ENCODE measurements at regions of chr1 and their contacts with region 1.

Region 1: GRCh38 chr1:156892190-156893047 is 1.1 kb upstream of the PEAR1 start:
- DNase-seq: peak; percentile 88
- H3K4me3 Mint-ChIP-seq: peak overlapping the region; percentile 56
- H3K27ac Mint-ChIP-seq: no peak overlapping the region
- H3K4me1 Mint-ChIP-seq: peaks cover 26% of the 10 kb centered on the region
- H3K27me3 Mint-ChIP-seq: peaks cover 18% of the 10 kb centered on the region
- CTCF ChIP-seq: peak; percentile 94

Region 2: DNA sequence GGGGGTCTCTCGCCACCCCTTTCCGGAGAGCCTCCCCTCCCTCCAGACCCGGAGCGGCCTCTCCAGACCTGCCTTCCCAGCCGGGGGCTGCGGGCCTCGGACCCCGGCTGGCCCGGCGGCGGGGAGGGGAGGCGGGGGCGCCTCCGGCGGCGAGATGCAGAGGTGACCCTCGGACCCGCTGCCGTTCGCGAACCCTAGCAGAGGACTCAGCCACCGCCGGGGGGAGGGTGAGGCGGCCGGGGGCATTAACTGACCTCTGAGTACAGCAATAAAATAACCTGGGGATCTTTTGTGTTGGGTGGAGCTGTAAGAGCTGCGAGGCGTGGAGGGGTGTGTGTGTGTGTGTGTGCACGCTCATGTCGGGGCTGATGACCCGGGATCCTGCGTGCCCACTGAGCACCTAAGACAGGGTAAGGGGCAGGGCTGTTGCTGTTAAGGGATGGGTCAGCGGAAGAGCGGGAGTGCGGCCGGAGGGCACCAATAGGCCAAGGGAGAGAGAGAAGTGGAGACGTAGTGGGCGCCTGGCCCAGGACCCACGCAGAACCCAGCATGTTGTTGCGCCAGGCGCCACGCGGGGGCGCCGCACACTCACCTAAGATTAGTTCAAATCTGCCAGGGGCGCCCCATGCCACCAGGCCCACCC is 266.9 kb before region 1 on chr1:
- CTCF ChIA-PET with region 1: interaction called, 7 read pairs
- POLR2A ChIA-PET with region 1: no interaction called
- intact Hi-C with region 1: loop called (anchors 1 kb)
- DNase-seq: peak; percentile 61
- H3K4me3 Mint-ChIP-seq: peak overlapping the region; percentile 35
- H3K27ac Mint-ChIP-seq: no peak overlapping the region
- H3K4me1 Mint-ChIP-seq: peaks cover 12% of the 10 kb centered on the region
- H3K27me3 Mint-ChIP-seq: peaks cover 61% of the 10 kb centered on the region
- CTCF ChIP-seq: peak; percentile 91

Region 3: DNA sequence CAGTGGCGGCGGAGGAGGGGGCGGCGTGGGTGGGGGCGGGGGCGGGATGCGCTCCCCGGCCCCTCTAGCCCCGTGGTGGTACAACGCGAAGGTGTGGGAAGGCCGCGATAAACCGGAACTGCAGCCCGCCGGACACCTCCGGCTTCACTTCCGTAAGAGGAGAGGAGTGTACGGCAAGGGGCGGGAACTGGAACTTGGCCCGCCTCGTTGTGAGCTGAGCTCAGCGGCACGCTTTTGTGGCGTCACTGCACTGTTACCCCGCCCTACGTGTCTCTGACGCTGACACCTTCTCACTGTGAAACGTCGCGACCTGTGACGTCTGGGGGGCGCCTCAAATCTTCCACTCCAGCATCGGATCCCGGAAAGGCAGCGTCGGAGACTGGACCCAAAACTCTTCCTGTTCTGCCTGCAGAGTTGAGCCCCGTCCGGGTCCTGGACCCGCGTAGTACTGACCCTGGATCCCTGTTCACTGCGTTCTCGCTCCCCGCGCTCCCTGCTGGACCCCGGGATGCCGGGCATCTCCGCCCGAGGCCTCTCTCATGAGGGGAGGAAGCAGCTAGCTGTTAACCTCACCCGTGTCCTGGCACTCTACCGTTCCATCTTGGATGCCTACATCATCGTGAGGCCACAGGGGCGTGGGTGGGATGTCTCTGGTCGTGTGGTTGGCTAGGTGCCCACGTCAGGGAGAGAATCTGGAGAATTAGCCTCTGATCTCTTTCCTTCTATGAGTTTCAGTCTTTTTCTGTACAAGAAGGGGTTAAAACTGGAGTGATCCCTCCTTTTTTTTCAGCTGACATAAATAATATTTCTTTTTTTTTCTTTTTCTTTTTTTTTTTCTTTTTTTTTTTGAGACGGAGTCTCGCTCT is 163.6 kb before region 1 on chr1 and contains the start of gene ISG20L2:
- CTCF ChIA-PET with region 1: interaction called, 76 read pairs
- POLR2A ChIA-PET with region 1: interaction called, 22 read pairs
- intact Hi-C with region 1: loop called (anchors 1 kb)
- DNase-seq: peak; percentile 98
- H3K4me3 Mint-ChIP-seq: no peak within 1 kb of the TSS
- H3K27ac Mint-ChIP-seq: no peak within 1 kb of the TSS
- H3K4me1 Mint-ChIP-seq: peaks cover 27% of the 10 kb centered on the region
- H3K27me3 Mint-ChIP-seq: no peaks in the 10 kb centered on the region
- CTCF ChIP-seq: no peak
- total RNA-seq, gene ISG20L2: 49.9 and 57.5 TPM in 2 replicates

Region 4: DNA sequence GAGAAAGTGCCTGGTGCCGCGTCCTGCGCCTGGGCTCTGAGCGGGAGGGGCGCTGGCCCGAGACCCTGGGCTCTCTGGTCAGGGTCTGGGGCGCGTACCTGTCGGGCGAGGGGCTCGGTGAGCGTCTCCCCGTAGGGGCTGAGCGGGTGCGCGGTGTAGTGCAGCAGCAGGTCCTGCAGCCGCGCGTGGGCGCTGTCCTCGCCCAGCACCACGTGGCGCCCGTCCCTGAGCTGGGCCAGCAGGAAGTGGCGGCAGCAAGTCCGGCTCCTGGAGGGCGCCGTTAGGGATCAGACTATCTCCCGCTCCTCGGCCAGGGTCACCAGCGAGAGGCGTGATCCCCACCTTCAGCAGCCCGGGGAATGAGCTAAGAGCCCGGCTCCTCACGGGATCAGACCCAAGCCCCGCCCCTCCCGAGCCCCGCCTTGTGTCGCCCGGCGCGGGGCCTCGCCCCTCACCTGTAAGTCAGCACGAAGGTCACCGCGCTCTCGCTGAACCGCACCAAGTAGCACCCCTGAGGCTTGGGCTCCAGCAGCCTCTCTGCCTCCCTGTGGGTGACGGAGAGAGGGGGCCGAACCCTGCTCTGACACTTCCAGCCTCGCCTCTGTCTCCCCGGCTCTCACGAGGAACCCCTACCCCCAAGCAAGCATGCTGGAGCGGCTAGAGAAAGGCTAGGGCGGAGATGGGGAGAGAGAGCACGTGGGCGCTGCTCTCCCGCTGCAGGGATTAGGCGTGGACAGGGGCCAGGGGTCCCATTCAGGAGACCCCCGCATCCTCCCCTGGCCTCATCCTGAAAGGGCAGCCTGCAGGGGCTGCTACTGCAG is 78.5 kb before region 1 on chr1:
- CTCF ChIA-PET with region 1: interaction called, 106 read pairs
- POLR2A ChIA-PET with region 1: no interaction called
- intact Hi-C with region 1: no loop called
- DNase-seq: peak; percentile 65
- H3K4me3 Mint-ChIP-seq: peak overlapping the region; percentile 73
- H3K27ac Mint-ChIP-seq: peak overlapping the region; percentile 27
- H3K4me1 Mint-ChIP-seq: peaks cover 48% of the 10 kb centered on the region
- H3K27me3 Mint-ChIP-seq: no peaks in the 10 kb centered on the region
- CTCF ChIP-seq: peak; percentile 55

Region 5: DNA sequence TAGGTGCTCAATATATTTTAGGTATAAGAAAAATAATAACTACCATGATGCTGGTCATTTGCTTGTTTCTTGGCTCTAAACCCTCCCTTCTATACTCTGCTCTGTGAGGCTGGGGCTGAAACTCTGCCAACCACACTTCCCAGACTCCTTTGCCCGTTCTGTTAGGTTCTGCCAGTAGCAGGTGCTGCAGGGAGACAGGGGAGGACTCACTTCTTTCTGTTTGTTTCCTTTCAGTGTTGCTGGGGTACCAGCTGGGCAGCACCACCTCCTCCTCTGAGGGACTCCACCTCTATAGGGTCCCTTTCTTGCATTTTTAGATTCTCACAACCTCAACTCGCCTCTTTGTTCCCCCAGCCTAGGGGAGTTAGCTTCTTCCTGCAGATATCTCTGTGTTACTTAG is 58.8 kb before region 1 on chr1:
- CTCF ChIA-PET with region 1: interaction called, 284 read pairs
- POLR2A ChIA-PET with region 1: no interaction called
- intact Hi-C with region 1: no loop called
- DNase-seq: no peak
- H3K4me3 Mint-ChIP-seq: no peak overlapping the region
- H3K27ac Mint-ChIP-seq: no peak overlapping the region
- H3K4me1 Mint-ChIP-seq: no peaks in the 10 kb centered on the region
- H3K27me3 Mint-ChIP-seq: peaks cover 54% of the 10 kb centered on the region
- CTCF ChIP-seq: no peak

Region 6: GRCh38 chr1:156860113-156860627 is 32.2 kb before region 1 on chr1:
- CTCF ChIA-PET with region 1: interaction called, 163 read pairs
- POLR2A ChIA-PET with region 1: interaction called, 3 read pairs
- intact Hi-C with region 1: loop called (anchors 1 kb)
- DNase-seq: peak; percentile 60
- H3K4me3 Mint-ChIP-seq: peak overlapping the region; percentile 57
- H3K27ac Mint-ChIP-seq: no peak overlapping the region
- H3K4me1 Mint-ChIP-seq: peaks cover 18% of the 10 kb centered on the region
- H3K27me3 Mint-ChIP-seq: peaks cover 53% of the 10 kb centered on the region
- CTCF ChIP-seq: peak; percentile 98

Region 7: GRCh38 chr1:156910309-156910782 is 17.9 kb after region 1 on chr1:
- CTCF ChIA-PET with region 1: interaction called, 34 read pairs
- POLR2A ChIA-PET with region 1: interaction called, 3 read pairs
- intact Hi-C with region 1: no loop called
- DNase-seq: peak; percentile 47
- H3K4me3 Mint-ChIP-seq: no peak overlapping the region
- H3K27ac Mint-ChIP-seq: no peak overlapping the region
- H3K4me1 Mint-ChIP-seq: peaks cover 19% of the 10 kb centered on the region
- H3K27me3 Mint-ChIP-seq: peaks cover 13% of the 10 kb centered on the region
- CTCF ChIP-seq: peak; percentile 99